ENCODE measurements at regions of chr6 and their contacts with region 1.

Region 1: GRCh38 chr6:79233611-79234149 is 802 bp downstream of the HMGN3 start:
- DNase-seq: peak; percentile 88
- H3K4me3 ChIP-seq: peak overlapping the region; percentile 74 to 85 (median 76)
- H3K27ac ChIP-seq: peak overlapping the region; percentile 70
- H3K4me1 ChIP-seq: peaks cover 3% of the 10 kb centered on the region
- H3K27me3 ChIP-seq: no peaks in the 10 kb centered on the region
- CTCF ChIP-seq: peak; percentile 30 to 42

Region 2: GRCh38 chr6:79307321-79308036 is 73.8 kb after region 1 on chr6:
- CTCF ChIA-PET with region 1: no interaction called
- dilution Hi-C with region 1: loop called (anchors 5 kb)
- in situ Hi-C with region 1: no loop called
- intact Hi-C with region 1: loop called (anchors 5 kb)
- DNase-seq: peak; percentile 95
- H3K4me3 ChIP-seq: no peak overlapping the region
- H3K27ac ChIP-seq: peak overlapping the region; percentile 48
- H3K4me1 ChIP-seq: peaks cover 11% of the 10 kb centered on the region
- H3K27me3 ChIP-seq: no peaks in the 10 kb centered on the region
- CTCF ChIP-seq: no peak

Region 3: DNA sequence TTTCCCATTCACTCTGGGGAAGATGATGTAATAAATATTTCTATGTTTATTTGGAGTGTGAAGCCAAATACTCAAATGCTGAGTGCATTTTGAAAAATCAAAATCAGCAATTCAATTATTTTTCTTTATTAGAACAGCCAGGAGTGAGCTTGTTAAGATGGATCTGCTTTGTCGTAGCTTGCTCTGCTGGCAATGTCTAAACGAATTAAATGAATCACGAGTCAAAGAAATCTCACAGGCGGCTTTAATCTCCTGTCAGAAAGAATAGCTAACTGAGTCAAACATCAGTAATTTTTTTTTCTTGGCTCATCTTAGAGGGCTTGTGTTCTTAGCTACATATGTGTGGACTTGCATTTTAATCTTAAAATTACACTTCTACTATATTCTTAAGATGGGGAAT is 101.0 kb after region 1 on chr6:
- CTCF ChIA-PET with region 1: no interaction called
- dilution Hi-C with region 1: no loop called
- in situ Hi-C with region 1: no loop called
- intact Hi-C with region 1: loop called (anchors 5 kb)
- DNase-seq: peak; percentile 50
- H3K4me3 ChIP-seq: no peak overlapping the region
- H3K27ac ChIP-seq: no peak overlapping the region
- H3K4me1 ChIP-seq: no peaks in the 10 kb centered on the region
- H3K27me3 ChIP-seq: no peaks in the 10 kb centered on the region
- CTCF ChIP-seq: no peak

Region 4: DNA sequence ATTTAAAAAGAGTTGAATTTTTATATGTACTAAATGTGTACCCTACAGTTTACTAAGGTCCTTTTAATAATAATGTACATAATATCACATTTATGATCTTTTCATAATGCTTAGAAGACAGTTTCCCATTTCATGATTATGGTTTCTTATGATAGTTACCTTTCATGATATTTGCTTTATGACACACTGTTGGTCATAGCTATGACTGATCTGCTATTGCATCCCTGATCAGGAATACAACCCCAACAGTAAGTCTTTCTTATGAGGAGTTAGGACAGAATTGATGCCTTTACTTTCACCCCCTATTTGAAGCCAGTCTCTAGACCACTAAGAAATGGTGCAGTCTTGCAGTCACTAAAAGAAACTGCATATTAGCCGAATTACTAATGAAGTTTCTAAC is 272.6 kb after region 1 on chr6:
- CTCF ChIA-PET with region 1: no interaction called
- dilution Hi-C with region 1: loop called (anchors 10 kb)
- in situ Hi-C with region 1: no loop called
- intact Hi-C with region 1: no loop called
- DNase-seq: peak; percentile 63
- H3K4me3 ChIP-seq: no peak overlapping the region
- H3K27ac ChIP-seq: no peak overlapping the region
- H3K4me1 ChIP-seq: no peaks in the 10 kb centered on the region
- H3K27me3 ChIP-seq: no peaks in the 10 kb centered on the region
- CTCF ChIP-seq: no peak